A549 (cell line): ENCODE measurements at regions of chr2 and their contacts with region 1.

Region 1: DNA sequence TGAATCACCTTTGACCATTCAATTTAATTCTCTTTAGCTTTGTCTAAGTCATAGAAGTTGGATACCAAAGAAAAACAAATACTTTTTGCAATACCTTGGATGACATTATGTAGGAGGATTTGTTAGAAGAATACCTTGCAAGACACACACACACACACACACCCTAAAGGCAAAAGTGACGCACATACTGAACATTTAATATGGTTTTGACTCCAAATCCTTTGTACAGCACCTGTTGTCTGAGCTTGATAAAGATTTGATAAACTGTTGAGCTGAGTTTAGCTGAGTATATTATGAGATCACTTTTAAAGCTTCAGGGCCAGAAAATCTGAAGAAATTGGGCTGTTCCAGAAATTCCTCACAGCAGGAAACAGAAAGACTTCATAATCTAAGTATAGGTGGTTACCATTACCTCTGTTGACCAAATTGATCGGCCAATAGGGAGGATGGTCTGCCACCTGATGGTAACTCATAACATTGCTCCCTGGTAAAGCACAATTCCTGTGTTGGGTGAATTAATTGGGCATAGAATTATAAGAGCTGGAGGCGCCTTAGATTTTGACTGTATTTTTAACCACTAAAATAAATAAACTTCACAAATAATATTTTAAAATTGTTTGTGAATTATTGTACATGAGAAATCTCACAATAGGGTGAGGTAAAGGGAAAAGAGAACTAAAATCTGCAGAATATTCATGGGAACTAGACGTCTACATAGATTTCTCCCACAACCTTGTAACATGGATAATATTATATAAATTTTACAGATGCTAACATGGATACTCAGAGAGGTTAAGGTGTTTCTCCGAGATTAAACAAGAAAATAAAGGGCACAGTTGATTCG is 21.9 kb upstream of the RPIA start:
- DNase-seq: peak; percentile 49 to 56
- ATAC-seq: peak; percentile 62 to 81; a peak in 5 of 6 replicates
- H3K4me3 ChIP-seq: no peak overlapping the region
- H3K27ac ChIP-seq: no peak overlapping the region
- H3K4me1 ChIP-seq: peaks cover 8% of the 10 kb centered on the region; the same call in 2 of the 3 replicates
- CTCF ChIP-seq: peak; percentile 61
- EP300 ChIP-seq: no peak
- POLR2A ChIP-seq: no peak
- RAD21 ChIP-seq: peak; percentile 63 to 69

Region 2: DNA sequence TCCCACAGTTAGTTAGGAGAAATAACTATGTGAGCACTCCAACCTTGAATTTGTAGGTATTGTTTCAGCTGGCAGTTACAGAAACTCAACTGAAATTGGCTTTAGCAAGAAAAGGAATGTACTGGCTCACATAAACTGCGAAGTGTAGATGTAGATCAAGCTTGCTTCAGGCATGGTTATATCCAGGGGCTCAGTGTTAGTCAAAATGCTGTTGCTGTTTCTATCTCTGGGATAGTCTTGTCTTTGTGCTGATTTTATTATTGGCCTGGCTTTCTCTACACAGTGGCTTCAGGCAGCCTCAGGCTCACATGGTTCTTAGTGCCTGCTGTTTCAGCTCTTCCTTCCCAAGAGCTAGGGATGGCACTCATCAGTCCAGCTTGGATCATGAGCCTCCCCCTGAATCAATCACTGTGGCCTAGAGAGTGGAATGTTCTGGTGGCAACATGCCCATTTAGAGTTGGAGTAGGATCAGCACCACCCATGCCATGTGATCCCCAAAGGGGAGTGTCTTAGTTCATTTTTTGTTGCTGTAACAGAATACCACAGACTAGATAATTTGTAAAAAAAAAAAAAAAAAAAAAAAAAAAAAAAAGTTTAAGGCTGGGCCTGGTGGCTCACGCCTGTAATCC is 148.0 kb before region 1 on chr2:
- CTCF ChIA-PET with region 1: no interaction called
- POLR2A ChIA-PET with region 1: no interaction called
- DNase-seq: no peak
- ATAC-seq: peak in 1 of 2 experiments; percentile 39; a peak in 1 of 6 replicates
- H3K4me3 ChIP-seq: no peak overlapping the region
- H3K27ac ChIP-seq: no peak overlapping the region
- H3K4me1 ChIP-seq: no peaks in the 10 kb centered on the region
- CTCF ChIP-seq: no peak
- EP300 ChIP-seq: no peak
- POLR2A ChIP-seq: no peak
- RAD21 ChIP-seq: no peak

Region 3: DNA sequence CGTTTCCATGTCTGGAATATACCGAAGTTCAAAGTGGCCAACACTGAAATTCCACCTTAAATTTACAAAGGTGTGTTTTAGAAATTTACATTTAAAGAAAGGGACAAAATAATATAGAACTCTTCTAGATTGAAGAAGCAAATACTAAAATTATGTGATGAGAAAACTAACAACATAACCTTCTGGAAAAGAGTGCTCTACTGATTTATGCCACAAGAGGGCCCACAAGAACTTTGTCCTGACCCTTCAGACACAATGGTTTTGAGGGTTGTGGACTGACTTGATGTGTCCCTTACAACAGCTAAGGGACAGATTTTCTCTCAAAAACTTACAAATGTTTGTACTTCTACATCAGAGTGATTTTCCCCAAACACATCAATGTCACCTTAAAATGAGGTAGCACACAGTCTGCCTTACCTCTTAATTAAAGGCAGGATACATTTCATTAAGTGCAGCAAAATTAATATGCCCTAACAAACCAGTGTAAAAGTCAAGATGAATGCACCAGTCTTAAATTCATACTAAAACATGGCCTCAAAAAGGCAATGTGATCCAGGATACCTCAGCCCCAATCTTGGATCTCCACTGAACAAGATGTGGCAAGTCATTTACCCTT is 78.5 kb before region 1 on chr2:
- CTCF ChIA-PET with region 1: interaction called, 125 read pairs
- POLR2A ChIA-PET with region 1: no interaction called
- DNase-seq: peak; percentile 61 to 73
- ATAC-seq: peak; percentile 90 to 94
- H3K4me3 ChIP-seq: no peak overlapping the region
- H3K27ac ChIP-seq: no peak overlapping the region
- H3K4me1 ChIP-seq: no peaks in the 10 kb centered on the region
- CTCF ChIP-seq: peak; percentile 95
- EP300 ChIP-seq: no peak
- POLR2A ChIP-seq: no peak
- RAD21 ChIP-seq: peak; percentile 89 to 90

Region 4: GRCh38 chr2:88614497-88615157 is 55.0 kb before region 1 on chr2:
- CTCF ChIA-PET with region 1: interaction called, 10 read pairs
- POLR2A ChIA-PET with region 1: no interaction called
- DNase-seq: no peak
- ATAC-seq: no peak
- H3K4me3 ChIP-seq: no peak overlapping the region
- H3K27ac ChIP-seq: no peak overlapping the region; a peak in 1 of 6 replicates
- H3K4me1 ChIP-seq: peaks cover 7% of the 10 kb centered on the region; the same call in 1 of the 3 replicates
- CTCF ChIP-seq: no peak
- EP300 ChIP-seq: no peak
- POLR2A ChIP-seq: no peak
- RAD21 ChIP-seq: no peak

Region 5: GRCh38 chr2:88641330-88641729 is 28.3 kb before region 1 on chr2:
- CTCF ChIA-PET with region 1: interaction called, 21 read pairs
- POLR2A ChIA-PET with region 1: no interaction called
- DNase-seq: no peak
- ATAC-seq: no peak
- H3K4me3 ChIP-seq: no peak overlapping the region
- H3K27ac ChIP-seq: no peak overlapping the region
- H3K4me1 ChIP-seq: no peaks in the 10 kb centered on the region
- CTCF ChIP-seq: no peak
- EP300 ChIP-seq: no peak
- POLR2A ChIP-seq: no peak
- RAD21 ChIP-seq: no peak

Region 6: GRCh38 chr2:88680266-88680902 is 10.8 kb after region 1 on chr2:
- CTCF ChIA-PET with region 1: interaction called, 51 read pairs
- POLR2A ChIA-PET with region 1: no interaction called
- DNase-seq: no peak
- ATAC-seq: no peak
- H3K4me3 ChIP-seq: no peak overlapping the region
- H3K27ac ChIP-seq: no peak overlapping the region
- H3K4me1 ChIP-seq: no peaks in the 10 kb centered on the region
- CTCF ChIP-seq: no peak
- EP300 ChIP-seq: no peak
- POLR2A ChIP-seq: no peak
- RAD21 ChIP-seq: no peak

Region 7: GRCh38 chr2:88765154-88765900 is 95.7 kb after region 1 on chr2:
- CTCF ChIA-PET with region 1: no interaction called
- POLR2A ChIA-PET with region 1: no interaction called
- DNase-seq: peak in 1 of 2 experiments; percentile 41
- ATAC-seq: peak; percentile 66 to 78
- H3K4me3 ChIP-seq: peak overlapping the region; percentile 37
- H3K27ac ChIP-seq: 0 out of 6 replicates have a peak overlapping the region, but pooled peaks of 1 of the 2 experiments have one; percentile 4
- H3K4me1 ChIP-seq: peaks cover 4% of the 10 kb centered on the region; the same call in 2 of the 3 replicates
- CTCF ChIP-seq: no peak
- EP300 ChIP-seq: no peak
- POLR2A ChIP-seq: no peak
- RAD21 ChIP-seq: no peak

Region 8: DNA sequence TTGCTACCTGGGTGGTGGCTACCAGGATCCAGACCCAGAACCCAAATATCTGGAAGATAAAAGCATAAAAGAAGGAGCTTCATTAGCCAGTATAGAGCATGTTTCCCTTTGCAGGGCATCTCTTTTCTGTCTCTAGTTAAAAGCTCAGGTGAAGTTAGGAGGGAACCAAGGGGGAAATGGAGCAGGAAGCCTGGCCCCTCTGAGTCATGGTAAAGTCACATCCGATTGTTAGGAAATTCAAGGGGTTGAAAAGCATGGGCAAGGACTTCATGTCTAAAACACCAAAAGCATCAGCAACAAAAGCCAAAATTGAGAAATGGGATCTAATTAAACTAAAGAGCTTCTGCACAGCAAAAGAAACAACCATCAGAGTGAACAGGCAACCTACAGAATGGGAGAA is 148.8 kb after region 1 on chr2:
- CTCF ChIA-PET with region 1: no interaction called
- POLR2A ChIA-PET with region 1: no interaction called
- DNase-seq: no peak
- ATAC-seq: no peak
- H3K4me3 ChIP-seq: no peak overlapping the region
- H3K27ac ChIP-seq: no peak overlapping the region
- H3K4me1 ChIP-seq: no peaks in the 10 kb centered on the region
- CTCF ChIP-seq: no peak
- EP300 ChIP-seq: no peak
- POLR2A ChIP-seq: no peak
- RAD21 ChIP-seq: no peak